Heart right ventricle (tissue), 16 donors: ENCODE measurements at regions of chr14 and their contacts with region 1.

Region 1: GRCh38 chr14:65403231-65403630 is 9.3 kb upstream of the FUT8 start:
- DNase-seq: no peak
- ATAC-seq: no peak
- H3K4me3 ChIP-seq: no peak overlapping the region
- H3K27ac ChIP-seq: no peak overlapping the region
- H3K4me1 ChIP-seq: no peaks in the 10 kb centered on the region
- H3K27me3 ChIP-seq: no peaks in the 10 kb centered on the region
- CTCF ChIP-seq: no peak

Region 2: GRCh38 chr14:65156568-65157366 is 246.5 kb before region 1 on chr14:
- intact Hi-C with region 1: no loop called
- DNase-seq: peak; percentile 28 to 33
- ATAC-seq: peak; percentile 66 to 92 (median 76)
- H3K4me3 ChIP-seq: peak overlapping the region in 2 of 10 donors; percentile 11 to 19
- H3K27ac ChIP-seq: peak overlapping the region in 9 of 10 donors; percentile 6 to 88 (median 52)
- H3K4me1 ChIP-seq: peaks cover 0 to 19% (median 0%) of the 10 kb centered on the region in 9 donors
- H3K27me3 ChIP-seq: no peaks in the 10 kb centered on the region
- CTCF ChIP-seq: no peak

Region 3: DNA sequence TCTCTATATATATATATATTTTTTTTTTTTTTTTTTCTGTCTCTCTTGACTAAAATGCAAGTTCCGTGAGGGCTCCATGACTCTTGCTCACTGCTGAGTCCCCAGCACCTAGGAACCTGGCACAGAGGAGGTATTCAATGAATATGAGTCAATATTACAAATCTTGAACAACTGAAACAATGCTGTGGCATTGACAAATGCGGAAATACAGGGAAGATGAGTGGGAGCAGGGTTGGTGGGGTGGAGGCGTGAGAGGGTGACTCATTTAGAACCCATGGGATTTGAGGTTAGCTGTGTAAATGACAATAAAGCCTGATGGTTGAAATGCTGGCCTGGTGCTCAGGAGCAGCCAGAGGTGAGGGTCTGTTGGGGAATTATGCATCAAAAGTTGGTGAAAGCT is 112.4 kb before region 1 on chr14:
- intact Hi-C with region 1: loop called in 1 of 10 experiments (anchors 10 kb)
- DNase-seq: no peak
- ATAC-seq: no peak
- H3K4me3 ChIP-seq: no peak overlapping the region
- H3K27ac ChIP-seq: no peak overlapping the region
- H3K4me1 ChIP-seq: peaks cover 0 to 13% (median 0%) of the 10 kb centered on the region in 9 donors
- H3K27me3 ChIP-seq: peaks cover 0 to 4% (median 0%) of the 10 kb centered on the region in 7 donors
- CTCF ChIP-seq: no peak